Activated B cell treated with CpG ODN at 0.5 μM for 24 hours (primary cell): ENCODE measurements at regions of chr1 and their contacts with region 1.

Region 1: DNA sequence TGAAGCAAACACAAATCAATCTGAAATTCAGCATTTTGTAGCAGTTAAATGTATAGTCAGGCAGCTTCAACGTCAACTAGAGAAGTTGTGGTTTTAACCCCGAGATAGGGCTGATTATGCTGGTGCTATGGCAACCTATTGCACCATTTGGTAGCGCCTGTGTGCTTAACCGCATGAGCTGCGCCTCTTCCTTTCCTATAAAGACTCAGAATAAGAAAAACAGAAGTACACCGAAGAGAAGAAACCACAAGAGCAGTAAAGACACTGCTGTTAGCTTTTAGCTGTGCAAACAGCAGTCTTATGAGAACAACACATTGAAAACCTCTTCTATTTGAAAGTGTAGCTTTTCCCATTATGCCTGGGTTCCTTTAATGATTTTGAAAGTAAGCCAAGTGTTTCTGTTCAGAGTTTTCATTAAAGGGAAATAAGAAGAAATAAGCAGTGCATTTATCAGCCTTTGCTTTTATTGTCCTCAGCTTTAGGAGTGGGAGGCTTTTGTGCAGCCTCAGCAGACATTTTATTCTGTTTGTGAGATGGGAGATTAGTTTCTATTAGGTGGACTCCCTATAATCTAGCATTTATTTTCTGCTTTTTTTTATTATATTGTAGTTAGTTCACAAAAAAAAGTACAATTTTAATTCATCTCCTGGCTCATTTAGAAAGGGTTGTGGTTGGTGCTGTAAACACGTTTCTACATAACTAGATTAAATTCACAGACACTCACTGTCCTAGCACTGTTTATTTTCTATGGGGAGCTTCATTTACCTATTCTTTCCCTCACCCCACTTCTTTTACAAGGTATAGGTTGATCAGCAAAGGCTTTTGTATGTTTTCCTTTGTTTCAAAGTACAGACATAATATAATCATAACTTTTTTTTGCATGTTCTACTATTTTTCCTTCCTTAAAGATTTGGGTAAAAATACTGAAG is 43.3 kb downstream of the PTPRC start:
- DNase-seq: peak; percentile 42
- ATAC-seq: peak; percentile 73
- H3K4me3 Mint-ChIP-seq: peak overlapping the region; percentile 63
- H3K27ac Mint-ChIP-seq: peak overlapping the region; percentile 88
- H3K4me1 Mint-ChIP-seq: peaks cover 92% of the 10 kb centered on the region
- H3K27me3 Mint-ChIP-seq: no peaks in the 10 kb centered on the region
- CTCF ChIP-seq: no peak

Region 2: DNA sequence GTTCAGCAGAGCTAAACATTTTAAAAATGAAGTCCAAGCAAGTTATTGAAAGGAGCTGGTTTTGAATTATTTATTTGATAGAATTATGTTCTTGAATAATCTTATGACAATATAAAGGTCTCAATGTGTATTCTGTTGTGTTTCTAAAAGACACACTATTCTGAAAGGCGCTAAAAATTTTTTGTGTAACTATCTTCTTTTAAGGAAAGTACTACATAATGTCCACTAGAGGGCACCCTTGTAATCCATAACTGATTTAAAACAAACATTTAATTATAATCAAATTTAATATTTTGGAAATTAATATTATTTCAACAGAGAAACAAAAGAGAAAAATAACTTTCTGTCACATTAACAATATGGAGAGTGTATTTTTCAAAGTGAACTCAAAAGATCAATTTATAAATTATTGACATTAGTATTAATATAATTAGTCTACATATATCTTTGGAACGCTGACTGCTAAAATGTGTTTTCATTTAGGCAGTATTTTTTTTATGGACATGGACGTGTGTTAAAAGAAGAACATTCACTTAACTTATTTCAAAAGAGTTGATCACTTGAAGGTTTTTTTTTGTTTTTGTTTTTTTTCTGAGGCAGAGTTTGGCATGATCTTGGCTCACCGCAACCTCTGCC is 1155.2 kb before region 1 on chr1:
- CTCF ChIA-PET with region 1: no interaction called
- POLR2A ChIA-PET with region 1: no interaction called
- intact Hi-C with region 1: loop called (anchors 5 kb)
- DNase-seq: no peak
- ATAC-seq: no peak
- H3K4me3 Mint-ChIP-seq: no peak overlapping the region
- H3K27ac Mint-ChIP-seq: no peak overlapping the region
- H3K4me1 Mint-ChIP-seq: no peaks in the 10 kb centered on the region
- H3K27me3 Mint-ChIP-seq: no peaks in the 10 kb centered on the region
- CTCF ChIP-seq: peak; percentile 45

Region 3: DNA sequence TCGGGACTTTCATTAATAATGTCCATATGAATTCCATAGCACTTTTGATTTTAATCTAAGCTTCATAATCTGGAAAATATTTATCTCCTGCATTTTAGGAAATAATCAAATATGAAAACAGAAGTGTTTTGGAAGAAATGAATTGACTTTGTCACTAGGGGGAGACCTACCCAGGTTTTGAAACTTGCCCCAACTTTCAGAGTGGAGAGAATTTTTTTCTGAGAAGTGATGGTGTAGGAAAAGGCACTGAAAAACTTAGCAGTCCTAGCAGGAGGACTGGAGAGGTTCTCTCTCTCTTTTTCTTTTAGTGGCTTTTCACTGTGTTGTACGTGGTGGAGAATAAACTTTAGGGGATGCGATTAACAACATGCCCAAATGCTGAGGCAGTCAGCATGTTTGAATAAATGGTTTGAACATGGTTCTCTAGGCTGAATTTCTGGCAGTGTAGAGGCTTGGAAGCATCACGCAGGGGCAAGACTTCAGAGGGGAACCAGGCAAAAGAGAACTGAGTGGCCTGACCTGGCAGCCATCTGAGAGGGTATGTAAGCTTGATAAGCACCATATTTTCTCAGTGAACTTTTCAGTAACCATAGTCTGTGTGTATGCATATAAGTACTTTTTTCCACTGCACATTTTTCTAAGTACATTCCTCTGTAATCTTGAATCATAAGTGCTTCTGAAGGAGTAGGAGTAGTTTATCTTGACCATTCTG is 593.6 kb before region 1 on chr1:
- CTCF ChIA-PET with region 1: interaction called, 3 read pairs
- POLR2A ChIA-PET with region 1: no interaction called
- intact Hi-C with region 1: loop called (anchors 1 kb)
- DNase-seq: no peak
- ATAC-seq: peak; percentile 42
- H3K4me3 Mint-ChIP-seq: no peak overlapping the region
- H3K27ac Mint-ChIP-seq: no peak overlapping the region
- H3K4me1 Mint-ChIP-seq: no peaks in the 10 kb centered on the region
- H3K27me3 Mint-ChIP-seq: peaks cover 6% of the 10 kb centered on the region
- CTCF ChIP-seq: no peak

Region 4: DNA sequence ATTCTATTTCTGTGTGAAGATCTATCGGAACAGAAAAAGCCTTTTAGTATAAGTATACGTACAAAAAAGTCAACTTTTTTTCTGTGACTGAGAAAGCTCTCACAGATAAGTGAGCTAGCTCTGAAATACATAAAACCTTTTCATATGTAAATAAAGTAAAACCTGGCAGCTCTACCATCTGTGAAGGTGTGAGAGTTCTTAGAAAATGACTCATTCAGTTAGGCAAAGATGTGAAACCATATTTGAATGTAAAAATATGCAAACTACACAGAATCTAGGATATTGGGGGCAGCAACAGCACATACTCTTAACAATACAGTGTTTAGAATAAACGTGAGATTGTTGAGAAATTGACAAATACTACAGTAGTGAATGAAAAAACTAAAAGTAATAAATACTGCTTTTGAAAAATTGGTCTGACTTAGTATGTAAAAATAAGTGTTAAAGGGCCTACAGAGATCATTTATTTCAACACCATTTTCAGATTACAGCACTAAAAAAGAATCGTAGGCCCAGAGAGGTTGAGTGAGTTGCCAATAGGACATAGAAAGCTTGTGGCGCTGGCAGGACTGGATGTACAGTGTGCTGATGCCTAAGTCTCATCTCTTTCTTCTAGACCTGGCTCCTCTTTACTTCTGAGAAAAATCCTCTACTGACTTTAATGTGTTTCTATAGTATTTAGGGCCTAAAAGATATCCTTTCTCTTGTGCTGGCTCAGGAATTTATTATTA is 161.4 kb before region 1 on chr1:
- CTCF ChIA-PET with region 1: interaction called, 11 read pairs
- POLR2A ChIA-PET with region 1: interaction called, 16 read pairs
- intact Hi-C with region 1: loop called (anchors 1 kb)
- DNase-seq: no peak
- ATAC-seq: peak; percentile 70
- H3K4me3 Mint-ChIP-seq: peak overlapping the region; percentile 69
- H3K27ac Mint-ChIP-seq: peak overlapping the region; percentile 81
- H3K4me1 Mint-ChIP-seq: peaks cover 63% of the 10 kb centered on the region
- H3K27me3 Mint-ChIP-seq: no peaks in the 10 kb centered on the region
- CTCF ChIP-seq: no peak

Region 5: GRCh38 chr1:198638894-198639635 is 43.0 kb before region 1 on chr1 and contains the start of gene PTPRC:
- CTCF ChIA-PET with region 1: interaction called, 4 read pairs
- POLR2A ChIA-PET with region 1: interaction called, 39 read pairs
- intact Hi-C with region 1: loop called (anchors 1 kb)
- DNase-seq: no peak
- ATAC-seq: peak; percentile 78
- H3K4me3 Mint-ChIP-seq: peak within 1 kb of the TSS; percentile 87
- H3K27ac Mint-ChIP-seq: peak within 1 kb of the TSS; percentile 95
- H3K4me1 Mint-ChIP-seq: peaks cover 68% of the 10 kb centered on the region
- H3K27me3 Mint-ChIP-seq: no peaks in the 10 kb centered on the region
- CTCF ChIP-seq: no peak
- total RNA-seq, gene PTPRC: 426 and 506 TPM in 2 replicates

Region 6: DNA sequence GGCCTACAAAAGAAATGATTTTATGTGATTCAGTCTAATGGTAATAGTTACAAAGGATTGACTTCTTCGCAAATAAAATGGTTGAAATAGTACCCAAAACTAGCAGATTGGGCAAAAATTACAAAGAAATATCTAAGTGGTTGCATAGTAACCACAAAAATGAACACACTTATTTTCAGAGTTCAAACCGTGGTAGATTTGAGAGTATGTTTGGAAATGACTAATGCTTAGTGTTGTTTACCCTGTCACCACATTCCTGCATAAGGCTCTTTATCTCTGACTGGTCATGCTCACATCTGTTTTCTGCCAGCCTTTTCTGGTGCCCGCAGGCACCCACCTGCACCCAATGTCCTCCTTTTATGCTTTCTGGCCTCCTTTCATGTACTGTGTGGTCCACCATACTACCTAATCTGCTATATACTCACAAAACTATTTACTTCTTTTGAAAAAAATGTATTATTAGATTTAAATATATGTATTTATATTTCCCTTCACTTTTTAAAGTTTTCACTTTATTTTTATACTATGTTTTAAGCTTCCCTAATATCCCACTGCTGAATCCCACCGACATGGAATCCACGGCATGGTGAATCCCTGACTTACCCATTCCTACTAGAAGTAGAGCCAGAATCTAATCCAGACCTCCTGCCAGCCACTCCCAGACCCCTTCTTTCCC is 12.9 kb before region 1 on chr1:
- CTCF ChIA-PET with region 1: interaction called, 6 read pairs
- POLR2A ChIA-PET with region 1: interaction called, 80 read pairs
- intact Hi-C with region 1: loop called (anchors 1 kb)
- DNase-seq: no peak
- ATAC-seq: peak; percentile 57
- H3K4me3 Mint-ChIP-seq: peak overlapping the region; percentile 42
- H3K27ac Mint-ChIP-seq: peak overlapping the region; percentile 88
- H3K4me1 Mint-ChIP-seq: peaks cover 89% of the 10 kb centered on the region
- H3K27me3 Mint-ChIP-seq: no peaks in the 10 kb centered on the region
- CTCF ChIP-seq: no peak